Caco-2 (cell line): ENCODE measurements at regions of chr3 and their contacts with region 1.

Region 1: DNA sequence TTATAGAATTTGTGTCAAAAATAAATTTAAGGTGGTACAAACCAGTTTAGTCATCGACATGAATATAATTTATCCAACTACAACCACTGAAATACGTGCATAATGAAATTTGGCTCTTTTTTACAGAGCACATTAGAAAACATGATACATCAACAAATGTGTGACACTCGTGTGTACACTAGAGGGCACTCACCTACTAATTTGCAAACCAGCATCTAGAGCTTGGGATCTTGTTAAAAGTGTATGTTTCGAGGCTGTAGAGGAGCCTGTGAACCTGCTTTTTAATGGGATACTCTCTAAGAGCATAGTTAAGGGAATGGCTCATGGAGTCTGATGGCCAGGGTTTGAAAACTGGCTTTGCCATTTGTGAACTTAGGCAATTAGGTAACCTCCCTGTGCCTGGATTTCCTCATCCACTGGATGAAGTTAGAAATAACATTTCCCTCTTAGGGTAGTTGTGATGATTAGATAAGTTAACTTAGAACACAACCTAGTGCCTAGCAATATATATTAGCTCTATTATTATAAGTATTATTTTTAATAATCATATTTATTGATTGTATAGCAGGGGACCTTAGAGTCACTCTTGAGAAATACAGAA is 8.8 kb upstream of the CPOX start:
- DNase-seq: peak; percentile 52 to 53
- H3K4me3 ChIP-seq: no peak overlapping the region
- H3K4me3 Mint-ChIP-seq: no peak overlapping the region
- H3K27ac Mint-ChIP-seq: no peak overlapping the region
- H3K4me1 ChIP-seq: no peaks in the 10 kb centered on the region
- H3K4me1 Mint-ChIP-seq: no peaks in the 10 kb centered on the region
- H3K27me3 ChIP-seq: no peaks in the 10 kb centered on the region
- H3K27me3 Mint-ChIP-seq: no peaks in the 10 kb centered on the region
- CTCF ChIP-seq: peak; percentile 73 to 74

Region 2: DNA sequence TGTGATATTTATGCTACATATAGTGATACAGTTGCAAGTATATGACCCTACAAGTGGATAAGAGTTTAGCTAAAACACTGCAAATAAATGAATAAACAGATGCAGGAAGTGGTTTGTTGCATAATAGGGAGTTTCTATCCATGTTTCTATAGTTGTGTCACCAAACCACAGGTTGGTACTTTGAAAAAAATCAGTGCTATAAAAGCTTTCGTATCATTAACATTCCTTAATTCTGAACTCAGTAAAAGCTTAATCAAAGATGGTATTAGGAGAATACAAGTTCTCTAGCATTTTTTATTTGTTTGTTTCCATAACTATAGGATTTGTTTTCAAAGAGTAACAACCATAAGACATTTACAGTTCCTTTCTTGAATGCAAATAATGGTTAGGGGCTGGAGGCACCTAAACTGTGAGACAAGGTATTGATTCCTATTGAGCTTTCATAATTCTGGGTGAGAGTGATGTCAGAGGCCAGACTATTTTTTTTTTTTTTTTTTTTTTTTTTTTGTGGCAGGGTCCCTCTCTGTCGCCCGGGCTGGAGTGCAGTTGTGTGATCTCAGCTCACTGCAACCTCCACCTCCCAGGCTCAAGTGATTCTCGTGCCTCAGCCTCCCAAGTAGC is 38.4 kb before region 1 on chr3:
- CTCF ChIA-PET with region 1: no interaction called
- POLR2A ChIA-PET with region 1: no interaction called
- intact Hi-C with region 1: no loop called
- DNase-seq: no peak
- H3K4me3 ChIP-seq: no peak overlapping the region
- H3K4me3 Mint-ChIP-seq: no peak overlapping the region
- H3K27ac Mint-ChIP-seq: no peak overlapping the region
- H3K4me1 ChIP-seq: no peaks in the 10 kb centered on the region
- H3K4me1 Mint-ChIP-seq: no peaks in the 10 kb centered on the region
- H3K27me3 ChIP-seq: no peaks in the 10 kb centered on the region
- H3K27me3 Mint-ChIP-seq: no peaks in the 10 kb centered on the region
- CTCF ChIP-seq: no peak

Region 3: DNA sequence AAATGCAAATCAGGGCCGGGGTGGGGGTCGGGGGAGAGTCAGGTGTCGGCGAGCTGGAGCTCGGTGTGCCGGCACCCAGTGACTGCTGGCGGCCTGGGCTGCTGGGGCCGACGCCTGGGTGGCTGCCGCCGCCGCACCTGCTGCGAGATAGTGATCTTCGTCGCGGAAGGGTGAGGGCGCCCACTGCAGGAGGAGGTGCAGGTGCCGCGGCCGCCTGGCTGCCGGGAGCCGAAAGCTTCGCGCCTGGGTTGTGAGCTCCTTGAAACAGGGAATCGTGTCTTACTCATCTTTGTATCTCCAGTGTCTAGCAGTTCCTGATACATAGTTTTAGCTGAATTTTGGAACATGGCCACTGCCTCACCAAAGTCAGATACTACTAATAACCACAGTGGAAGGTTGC is 55.3 kb after region 1 on chr3:
- CTCF ChIA-PET with region 1: interaction called, 7 read pairs
- POLR2A ChIA-PET with region 1: no interaction called
- intact Hi-C with region 1: loop called (anchors 5 kb)
- DNase-seq: peak; percentile 42
- H3K4me3 ChIP-seq: no peak overlapping the region
- H3K4me3 Mint-ChIP-seq: peak overlapping the region; percentile 38
- H3K27ac Mint-ChIP-seq: no peak overlapping the region
- H3K4me1 ChIP-seq: no peaks in the 10 kb centered on the region; the same call in none of the 2 replicates
- H3K4me1 Mint-ChIP-seq: no peaks in the 10 kb centered on the region
- H3K27me3 ChIP-seq: no peaks in the 10 kb centered on the region
- H3K27me3 Mint-ChIP-seq: no peaks in the 10 kb centered on the region
- CTCF ChIP-seq: peak in 1 of 2 experiments; percentile 50

Region 4: GRCh38 chr3:98705706-98706105 is 103.5 kb after region 1 on chr3:
- CTCF ChIA-PET with region 1: no interaction called
- POLR2A ChIA-PET with region 1: no interaction called
- intact Hi-C with region 1: loop called (anchors 1 kb)
- DNase-seq: peak in 1 of 2 experiments; percentile 22
- H3K4me3 ChIP-seq: no peak overlapping the region
- H3K4me3 Mint-ChIP-seq: no peak overlapping the region
- H3K27ac Mint-ChIP-seq: no peak overlapping the region
- H3K4me1 ChIP-seq: peaks cover 48% of the 10 kb centered on the region
- H3K4me1 Mint-ChIP-seq: peaks cover 54% of the 10 kb centered on the region
- H3K27me3 ChIP-seq: no peaks in the 10 kb centered on the region
- H3K27me3 Mint-ChIP-seq: no peaks in the 10 kb centered on the region
- CTCF ChIP-seq: no peak

Region 5: DNA sequence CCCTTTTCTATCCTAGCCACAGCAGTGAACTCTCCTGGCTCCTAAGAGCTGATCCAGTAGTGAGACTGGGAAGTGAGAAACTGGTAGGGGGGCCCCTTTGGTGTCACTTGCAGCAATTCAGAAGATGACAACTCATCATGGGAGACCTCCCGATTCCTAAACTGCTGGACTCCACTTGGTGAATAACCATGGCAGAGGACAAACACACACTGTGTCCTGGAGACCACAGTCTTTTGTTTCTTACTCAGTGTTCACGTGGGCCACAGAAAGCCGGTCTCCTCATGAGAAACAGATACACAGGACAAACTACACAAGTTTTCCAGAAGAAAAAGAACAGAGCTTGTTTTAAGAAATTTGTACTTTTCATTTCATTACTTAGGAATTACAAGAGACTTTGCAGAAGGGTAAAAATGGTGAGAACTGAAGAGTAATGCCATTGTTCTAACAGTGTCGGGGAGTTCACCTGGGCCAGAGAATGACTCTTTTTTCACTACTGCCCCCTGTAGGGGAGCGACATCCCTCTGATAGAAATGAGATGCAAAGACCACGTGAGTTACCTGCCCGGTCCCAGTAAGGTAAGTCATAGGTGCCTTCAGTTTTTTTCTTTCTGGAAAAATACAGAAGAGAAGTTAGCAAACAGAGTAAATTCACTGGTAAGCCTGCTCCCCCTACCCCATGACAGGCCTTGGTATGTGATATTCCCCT is 199.0 kb after region 1 on chr3:
- CTCF ChIA-PET with region 1: interaction called, 3 read pairs
- POLR2A ChIA-PET with region 1: no interaction called
- intact Hi-C with region 1: loop called (anchors 1 kb)
- DNase-seq: no peak
- H3K4me3 ChIP-seq: no peak overlapping the region
- H3K4me3 Mint-ChIP-seq: no peak overlapping the region
- H3K27ac Mint-ChIP-seq: no peak overlapping the region
- H3K4me1 ChIP-seq: peaks cover 5% of the 10 kb centered on the region; the same call in 1 of the 2 replicates
- H3K4me1 Mint-ChIP-seq: peaks cover 2% of the 10 kb centered on the region
- H3K27me3 ChIP-seq: no peaks in the 10 kb centered on the region
- H3K27me3 Mint-ChIP-seq: no peaks in the 10 kb centered on the region
- CTCF ChIP-seq: peak in 1 of 2 experiments; percentile 16